ENCODE measurements at regions of chrX and their contacts with region 1.

Region 1: GRCh38 chrX:17689971-17690409 is 47.3 kb upstream of the SCML1 start:
- DNase-seq: peak; percentile 49
- H3K4me3 ChIP-seq: no peak overlapping the region
- H3K27ac ChIP-seq: no peak overlapping the region
- H3K4me1 ChIP-seq: no peaks in the 10 kb centered on the region
- H3K27me3 ChIP-seq: no peaks in the 10 kb centered on the region
- CTCF ChIP-seq: peak; percentile 73 to 75

Region 2: DNA sequence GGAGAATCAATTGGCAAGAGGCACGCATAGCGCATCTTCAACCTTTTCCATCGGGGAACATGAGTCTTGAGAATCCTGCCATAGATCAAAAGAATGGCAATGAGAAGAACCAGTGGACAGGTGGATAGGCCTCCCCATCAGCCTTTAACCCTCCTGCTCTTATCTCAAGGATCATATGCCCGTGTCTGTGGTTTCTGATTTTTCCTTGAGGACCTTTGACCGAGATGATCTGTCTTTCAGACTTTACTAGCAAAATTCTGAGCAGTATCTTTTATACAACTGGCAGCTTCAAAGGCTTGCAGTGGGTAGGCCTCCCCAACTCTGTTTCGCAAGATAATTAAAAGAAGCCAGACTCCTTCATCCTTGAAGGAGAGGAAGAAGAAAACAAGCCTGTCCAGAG is 569.2 kb before region 1 on chrX:
- CTCF ChIA-PET with region 1: no interaction called
- dilution Hi-C with region 1: no loop called
- in situ Hi-C with region 1: loop called in 1 of 2 experiments (anchors 25 kb)
- intact Hi-C with region 1: loop called (anchors 1 kb)
- DNase-seq: no peak
- H3K4me3 ChIP-seq: no peak overlapping the region
- H3K27ac ChIP-seq: no peak overlapping the region
- H3K4me1 ChIP-seq: no peaks in the 10 kb centered on the region
- H3K27me3 ChIP-seq: no peaks in the 10 kb centered on the region
- CTCF ChIP-seq: no peak

Region 3: DNA sequence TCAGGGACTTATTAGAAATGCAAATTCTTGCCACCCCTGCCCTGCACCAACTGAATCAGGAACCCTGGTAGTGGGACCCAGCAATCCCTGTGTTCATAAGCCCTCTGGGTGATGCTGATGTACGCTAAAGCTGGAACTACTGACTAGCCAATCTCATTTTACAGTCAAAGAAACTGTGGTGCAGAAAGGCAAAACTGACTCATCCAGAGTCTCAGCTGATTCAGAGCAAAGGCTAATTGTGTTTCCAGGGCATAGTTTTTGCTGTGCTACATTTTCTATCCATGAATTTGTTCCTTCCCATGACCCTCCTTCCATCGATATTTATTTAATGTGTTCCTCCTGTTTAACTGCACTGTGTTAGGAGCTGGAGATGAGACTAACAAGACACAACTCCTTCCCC is 536.0 kb before region 1 on chrX:
- CTCF ChIA-PET with region 1: no interaction called
- dilution Hi-C with region 1: no loop called
- in situ Hi-C with region 1: loop called in 1 of 2 experiments (anchors 25 kb)
- intact Hi-C with region 1: no loop called
- DNase-seq: peak; percentile 35
- H3K4me3 ChIP-seq: no peak overlapping the region
- H3K27ac ChIP-seq: no peak overlapping the region
- H3K4me1 ChIP-seq: no peaks in the 10 kb centered on the region
- H3K27me3 ChIP-seq: no peaks in the 10 kb centered on the region
- CTCF ChIP-seq: no peak

Region 4: DNA sequence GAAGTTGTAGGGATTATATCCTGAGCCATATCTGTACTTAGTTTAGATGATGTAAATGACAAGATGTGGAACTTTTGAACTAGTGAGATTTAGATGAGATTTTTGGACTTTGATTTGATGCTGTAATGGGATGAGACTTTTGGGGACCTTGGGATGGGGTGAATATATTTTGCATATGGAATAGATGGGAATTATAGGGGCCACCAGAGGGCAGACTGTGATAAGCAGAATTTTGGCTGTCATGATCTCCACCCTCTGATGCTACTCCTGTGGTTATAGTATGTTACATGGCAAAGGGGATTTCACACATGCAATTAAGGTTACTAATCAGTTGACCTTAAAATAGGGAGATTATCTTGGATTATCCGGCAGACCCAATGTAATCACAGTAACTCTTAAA is 529.0 kb before region 1 on chrX:
- CTCF ChIA-PET with region 1: no interaction called
- dilution Hi-C with region 1: no loop called
- in situ Hi-C with region 1: no loop called
- intact Hi-C with region 1: loop called (anchors 1 kb)
- DNase-seq: no peak
- H3K4me3 ChIP-seq: no peak overlapping the region
- H3K27ac ChIP-seq: no peak overlapping the region
- H3K4me1 ChIP-seq: no peaks in the 10 kb centered on the region
- H3K27me3 ChIP-seq: no peaks in the 10 kb centered on the region
- CTCF ChIP-seq: peak; percentile 21 to 39

Region 5: GRCh38 chrX:17242470-17242869 is 447.5 kb before region 1 on chrX:
- CTCF ChIA-PET with region 1: no interaction called
- dilution Hi-C with region 1: no loop called
- in situ Hi-C with region 1: loop called (anchors 10 kb)
- intact Hi-C with region 1: loop called (anchors 1 kb)
- DNase-seq: peak; percentile 43
- H3K4me3 ChIP-seq: no peak overlapping the region
- H3K27ac ChIP-seq: no peak overlapping the region
- H3K4me1 ChIP-seq: no peaks in the 10 kb centered on the region
- H3K27me3 ChIP-seq: peaks cover 9% of the 10 kb centered on the region
- CTCF ChIP-seq: peak; percentile 81 to 90

Region 6: GRCh38 chrX:17535229-17535628 is 154.8 kb before region 1 on chrX:
- CTCF ChIA-PET with region 1: no interaction called
- dilution Hi-C with region 1: no loop called
- in situ Hi-C with region 1: no loop called
- intact Hi-C with region 1: loop called (anchors 1 kb)
- DNase-seq: peak; percentile 32
- H3K4me3 ChIP-seq: no peak overlapping the region
- H3K27ac ChIP-seq: no peak overlapping the region
- H3K4me1 ChIP-seq: no peaks in the 10 kb centered on the region
- H3K27me3 ChIP-seq: no peaks in the 10 kb centered on the region
- CTCF ChIP-seq: peak; percentile 69 to 76

Region 7: DNA sequence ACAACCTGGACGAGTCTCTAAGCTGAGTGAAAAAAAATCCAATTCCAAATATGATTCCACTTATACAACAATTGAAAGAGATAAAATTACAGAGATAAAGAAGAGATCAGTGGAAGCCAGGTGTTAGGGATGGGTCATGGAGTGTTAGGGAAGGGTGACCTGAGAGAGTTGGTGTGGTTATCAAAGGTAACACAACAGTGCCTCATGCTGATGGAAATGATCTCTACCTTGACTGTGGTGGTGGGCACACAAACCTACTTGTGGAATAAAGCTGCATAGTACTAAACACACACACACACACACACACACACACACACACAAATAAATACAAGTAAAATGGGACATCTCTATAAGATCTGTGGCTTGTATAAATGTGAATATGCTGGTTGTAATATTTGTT is 504.7 kb after region 1 on chrX:
- CTCF ChIA-PET with region 1: no interaction called
- dilution Hi-C with region 1: no loop called
- in situ Hi-C with region 1: no loop called
- intact Hi-C with region 1: no loop called
- DNase-seq: no peak
- H3K4me3 ChIP-seq: no peak overlapping the region
- H3K27ac ChIP-seq: no peak overlapping the region
- H3K4me1 ChIP-seq: no peaks in the 10 kb centered on the region
- H3K27me3 ChIP-seq: no peaks in the 10 kb centered on the region
- CTCF ChIP-seq: no peak

Measured in mammary epithelial cell (primary cell).